ENCODE measurements at regions of chr9 and their contacts with region 1.

Region 1: GRCh38 chr9:69193685-69194032 is 19.6 kb downstream of the TJP2 start:
- DNase-seq: no peak
- H3K27ac ChIP-seq: no peak overlapping the region
- CTCF ChIP-seq: no peak

Region 2: GRCh38 chr9:69056191-69056815 is 137.4 kb before region 1 on chr9:
- CTCF ChIA-PET with region 1: interaction called, 57 read pairs
- POLR2A ChIA-PET with region 1: interaction called, 3 read pairs
- DNase-seq: no peak
- H3K27ac ChIP-seq: no peak overlapping the region
- CTCF ChIP-seq: no peak

Region 3: GRCh38 chr9:69121828-69122548 is 71.7 kb before region 1 on chr9:
- CTCF ChIA-PET with region 1: interaction called, 10 read pairs
- POLR2A ChIA-PET with region 1: no interaction called
- DNase-seq: peak; percentile 59
- H3K27ac ChIP-seq: peak overlapping the region; percentile 95
- CTCF ChIP-seq: no peak

Measured in RWPE1 (cell line).